ENCODE measurements at regions of chr3 and their contacts with region 1.

Region 1: DNA sequence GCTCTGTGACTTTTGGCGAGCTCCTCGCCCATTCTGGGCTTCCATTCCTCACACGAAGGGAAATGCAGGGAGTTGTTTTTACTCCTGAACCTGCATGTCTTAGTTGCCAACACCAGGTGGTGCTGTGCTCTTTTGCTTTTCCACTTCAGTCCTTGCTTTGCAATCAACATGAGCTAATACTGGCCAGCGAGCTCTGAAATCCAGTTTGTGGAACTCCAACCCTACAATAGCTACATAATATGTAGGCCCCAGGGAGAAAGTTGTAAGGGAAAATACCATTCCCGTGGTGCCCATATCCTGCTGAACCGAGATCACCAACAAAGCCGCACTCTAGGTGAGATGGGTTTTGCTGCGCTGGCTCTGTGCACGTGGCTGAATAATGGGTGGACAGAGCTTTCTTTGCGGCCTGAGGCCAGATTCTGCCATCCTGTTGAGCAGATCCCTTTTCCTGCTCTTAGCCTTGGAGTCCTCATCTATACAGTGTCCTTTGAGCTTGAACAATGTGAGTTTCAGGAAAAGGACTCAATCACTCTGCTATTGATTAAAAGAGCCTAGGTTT is 25.0 kb downstream of the LSM3 start:
- DNase-seq: peak; percentile 70
- H3K4me3 ChIP-seq: peak overlapping the region in 1 of 2 experiments; percentile 21; a peak in 1 of 4 replicates
- H3K27ac ChIP-seq: no peak overlapping the region; a peak in 1 of 4 replicates
- H3K4me1 ChIP-seq: peaks cover 3 to 17% of the 10 kb centered on the region in 2 experiments; a peak in 2 of 4 replicates
- H3K27me3 ChIP-seq: no peaks in the 10 kb centered on the region
- CTCF ChIP-seq: peak; percentile 82
- EP300 ChIP-seq: no peak
- RAD21 ChIP-seq: peak; percentile 95

Region 2: GRCh38 chr3:14188041-14188754 is 15.4 kb before region 1 on chr3:
- CTCF ChIA-PET with region 1: interaction called, 16 read pairs
- POLR2A ChIA-PET with region 1: no interaction called
- DNase-seq: no peak
- H3K4me3 ChIP-seq: no peak overlapping the region
- H3K27ac ChIP-seq: no peak overlapping the region
- H3K4me1 ChIP-seq: no peaks in the 10 kb centered on the region; a peak in 1 of 4 replicates
- H3K27me3 ChIP-seq: no peaks in the 10 kb centered on the region
- CTCF ChIP-seq: no peak
- EP300 ChIP-seq: no peak
- RAD21 ChIP-seq: no peak

Region 3: DNA sequence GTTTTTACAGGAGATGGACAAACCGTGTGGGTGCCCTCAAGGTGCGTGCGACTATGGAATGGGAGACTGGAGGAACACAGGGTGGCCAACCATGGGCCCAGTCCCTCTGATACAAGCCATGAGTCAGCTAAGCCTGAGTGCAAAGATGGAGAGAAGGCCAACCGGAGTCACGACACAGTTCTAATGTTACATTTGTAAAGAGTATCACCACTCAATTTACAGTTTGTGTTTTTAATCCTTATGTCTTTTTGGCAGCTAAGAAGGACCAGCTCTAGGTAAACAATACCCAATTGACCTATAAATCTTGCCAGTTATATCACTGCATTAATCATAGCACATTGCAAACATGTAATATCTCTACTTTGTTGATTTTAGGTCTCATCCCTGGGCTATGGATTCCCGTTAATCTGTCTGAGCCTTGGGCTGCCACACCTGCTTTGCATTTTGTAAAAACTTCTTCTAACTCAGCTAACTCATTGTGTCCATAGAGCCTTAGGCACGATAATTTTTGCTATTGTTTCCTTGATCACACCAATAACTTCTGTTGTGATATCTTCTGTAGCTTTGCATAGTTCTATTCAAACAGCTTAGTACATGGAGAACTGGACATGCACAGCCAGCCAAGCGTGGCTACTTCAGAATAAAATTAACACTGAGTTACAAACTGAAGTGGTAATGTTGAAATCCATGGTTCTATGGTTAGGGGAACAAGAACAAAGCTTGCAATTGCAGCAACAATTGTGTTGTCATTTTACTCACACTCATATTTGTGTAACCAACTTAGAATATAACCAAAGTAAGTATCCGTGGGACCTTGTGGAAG is 25.3 kb after region 1 on chr3:
- CTCF ChIA-PET with region 1: interaction called, 23 read pairs
- POLR2A ChIA-PET with region 1: no interaction called
- DNase-seq: no peak
- H3K4me3 ChIP-seq: no peak overlapping the region
- H3K27ac ChIP-seq: no peak overlapping the region
- H3K4me1 ChIP-seq: peaks cover 0 to 10% of the 10 kb centered on the region in 2 experiments; a peak in 2 of 4 replicates
- H3K27me3 ChIP-seq: no peaks in the 10 kb centered on the region
- CTCF ChIP-seq: no peak
- EP300 ChIP-seq: no peak
- RAD21 ChIP-seq: no peak

Region 4: DNA sequence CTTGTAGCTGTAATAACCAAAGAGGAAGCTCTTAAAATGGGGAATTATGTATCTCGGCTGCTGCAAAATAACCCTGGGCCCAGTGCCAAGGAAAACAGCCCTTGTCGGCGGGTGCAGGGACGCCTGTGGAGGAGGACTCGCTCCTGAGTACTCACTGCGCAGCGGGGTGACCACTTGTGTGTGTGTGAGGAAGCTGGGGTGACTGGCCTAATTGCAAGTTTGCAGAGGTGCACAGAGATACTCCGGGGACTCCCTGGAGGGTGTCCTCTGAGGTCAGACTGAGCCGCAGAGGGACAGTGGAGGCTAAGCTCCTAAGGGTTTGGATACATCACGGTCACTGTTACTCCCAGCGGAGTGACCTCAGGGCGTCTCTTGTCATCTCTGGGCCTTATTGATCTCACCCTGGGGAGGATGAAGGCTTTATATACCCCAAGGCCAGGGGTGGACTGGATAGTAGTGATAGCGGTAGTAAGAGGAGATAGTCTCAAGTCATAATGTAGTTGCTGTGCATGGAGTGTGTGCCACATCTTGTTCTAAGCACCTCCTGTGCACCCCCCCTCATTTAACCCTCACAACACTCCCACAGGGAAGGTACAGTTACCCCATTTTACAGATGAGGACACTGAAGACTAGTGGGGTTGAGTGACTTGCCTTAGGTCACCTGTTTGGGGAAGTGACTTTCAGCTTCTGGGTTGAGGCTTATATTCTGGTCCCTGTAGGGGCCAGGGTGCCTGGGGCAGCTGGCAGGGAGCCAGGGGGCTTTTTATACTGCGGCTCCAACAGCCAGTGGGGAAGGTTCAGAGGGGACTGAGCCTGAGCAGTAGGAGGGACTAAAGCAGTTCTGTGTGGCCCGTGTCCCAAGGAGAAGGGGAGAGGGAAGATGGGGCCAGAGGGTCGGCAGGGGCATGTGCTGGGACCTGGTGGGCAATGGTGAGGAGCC is 236.2 kb after region 1 on chr3:
- CTCF ChIA-PET with region 1: interaction called, 26 read pairs
- POLR2A ChIA-PET with region 1: no interaction called
- DNase-seq: peak; percentile 87
- H3K4me3 ChIP-seq: no peak overlapping the region
- H3K27ac ChIP-seq: peak overlapping the region; percentile 1 to 3; a peak in 2 of 4 replicates
- H3K4me1 ChIP-seq: peaks cover 41 to 43% of the 10 kb centered on the region in 2 experiments
- H3K27me3 ChIP-seq: no peaks in the 10 kb centered on the region
- CTCF ChIP-seq: no peak
- EP300 ChIP-seq: peak in 1 of 2 experiments; percentile 54; a peak in 1 of 4 replicates
- RAD21 ChIP-seq: 0 out of 2 replicates have a peak, but pooled peaks have one; percentile 13

Region 5: DNA sequence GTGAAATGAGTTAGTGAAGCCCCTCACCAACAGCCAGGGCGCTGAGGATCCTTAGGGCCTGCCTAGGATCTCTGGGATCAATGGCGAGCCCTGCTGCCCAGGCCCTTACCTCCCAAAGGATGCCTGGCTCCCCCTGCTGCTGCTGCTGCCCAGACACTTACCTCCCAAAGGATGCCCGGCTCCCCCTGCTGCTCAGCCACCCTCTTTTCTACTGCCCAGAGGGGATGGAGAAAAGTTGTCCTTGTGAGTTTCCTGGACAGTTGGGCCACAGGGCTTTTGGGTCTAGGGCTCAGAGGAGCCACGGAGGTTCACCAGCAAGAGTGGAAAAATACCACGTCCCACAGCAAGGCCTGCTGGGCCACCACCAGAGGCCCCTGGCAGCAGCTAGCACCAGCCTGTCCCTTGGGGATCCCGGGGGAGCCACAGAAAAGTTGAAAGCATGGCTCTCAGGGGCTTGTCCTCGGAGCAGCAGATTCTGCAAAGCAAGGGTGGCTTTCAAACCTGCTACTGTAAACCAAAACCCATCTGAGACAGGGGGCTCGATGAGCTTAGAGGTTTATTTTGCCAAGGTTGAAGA is 258.2 kb after region 1 on chr3:
- CTCF ChIA-PET with region 1: interaction called, 75 read pairs
- POLR2A ChIA-PET with region 1: interaction called, 4 read pairs
- DNase-seq: peak; percentile 86
- H3K4me3 ChIP-seq: no peak overlapping the region
- H3K27ac ChIP-seq: peak overlapping the region in 1 of 2 experiments; percentile 76; a peak in 1 of 4 replicates
- H3K4me1 ChIP-seq: peaks cover 9 to 17% of the 10 kb centered on the region in 2 experiments; a peak in 3 of 4 replicates
- H3K27me3 ChIP-seq: no peaks in the 10 kb centered on the region
- CTCF ChIP-seq: peak; percentile 78
- EP300 ChIP-seq: no peak
- RAD21 ChIP-seq: peak; percentile 88